IMR-90 (cell line): ENCODE measurements at regions of chr2 and their contacts with region 1.

Region 1: GRCh38 chr2:176317199-176317598 is 48.0 kb downstream of the MTX2 start:
- DNase-seq: no peak
- ATAC-seq: no peak
- H3K4me3 ChIP-seq: no peak overlapping the region
- H3K27ac ChIP-seq: no peak overlapping the region
- H3K4me1 ChIP-seq: no peaks in the 10 kb centered on the region
- H3K27me3 ChIP-seq: no peaks in the 10 kb centered on the region
- CTCF ChIP-seq: no peak
- POLR2A ChIP-seq: no peak
- RAD21 ChIP-seq: no peak

Region 2: DNA sequence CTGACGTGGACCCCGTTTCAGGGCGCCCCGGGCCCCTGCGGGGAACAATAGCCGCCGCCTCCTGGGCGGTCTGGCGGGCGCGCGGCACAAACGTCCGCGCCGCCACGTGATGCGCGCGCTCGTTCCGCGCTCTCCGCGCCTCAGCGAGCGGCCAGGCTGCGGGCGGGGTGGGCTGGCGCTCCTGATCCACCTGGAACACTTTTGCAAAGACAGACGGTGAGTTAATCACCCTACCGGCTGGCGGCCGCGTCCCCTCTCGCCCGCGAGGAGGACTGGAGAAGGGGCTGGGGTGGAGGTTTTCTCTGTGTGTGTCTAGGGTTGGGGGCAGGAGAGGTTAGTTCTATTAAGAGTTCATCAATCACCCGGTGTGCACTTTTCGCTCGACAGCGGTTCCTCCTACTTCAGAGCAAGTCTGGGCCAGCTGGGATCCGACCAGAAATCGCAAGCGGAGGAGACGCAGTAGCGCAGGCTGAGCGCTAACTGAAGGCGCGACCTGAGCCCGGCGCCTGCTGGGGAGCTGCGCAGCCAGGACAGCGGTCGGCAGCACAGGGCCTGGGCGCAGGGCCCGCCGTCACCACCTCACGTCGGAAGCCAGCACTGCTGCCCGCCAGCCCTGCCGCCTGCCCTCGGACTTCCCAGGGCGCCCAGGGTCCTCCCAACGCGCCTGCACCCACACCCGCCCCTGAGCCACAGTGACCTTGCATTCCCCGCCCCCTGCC is 139.0 kb before region 1 on chr2:
- CTCF ChIA-PET with region 1: no interaction called
- POLR2A ChIA-PET with region 1: no interaction called
- dilution Hi-C with region 1: no loop called
- in situ Hi-C with region 1: no loop called
- intact Hi-C with region 1: no loop called
- DNase-seq: no peak
- ATAC-seq: no peak
- H3K4me3 ChIP-seq: no peak overlapping the region
- H3K27ac ChIP-seq: no peak overlapping the region
- H3K4me1 ChIP-seq: no peaks in the 10 kb centered on the region
- H3K27me3 ChIP-seq: peaks cover 70% of the 10 kb centered on the region
- CTCF ChIP-seq: no peak
- POLR2A ChIP-seq: no peak
- RAD21 ChIP-seq: no peak

Region 3: DNA sequence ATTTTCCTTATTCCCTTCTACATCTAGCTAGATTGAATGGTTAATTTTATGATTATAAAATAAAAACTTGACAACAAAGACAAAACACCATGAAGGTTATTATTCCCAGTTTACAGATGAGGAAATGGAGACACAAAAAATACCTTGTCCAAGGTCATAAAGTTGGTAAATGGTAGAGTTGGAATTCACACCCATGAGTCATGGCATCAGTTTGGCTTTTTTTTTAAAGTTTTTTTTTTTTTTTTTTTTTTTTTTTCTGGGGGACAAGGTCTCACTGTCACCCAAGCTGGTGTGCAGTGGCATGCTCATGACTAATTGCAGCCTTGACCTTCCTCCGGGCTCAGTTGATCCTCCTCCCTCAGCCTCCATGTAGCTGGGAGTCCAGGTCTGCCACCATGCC is 22.0 kb after region 1 on chr2:
- CTCF ChIA-PET with region 1: no interaction called
- POLR2A ChIA-PET with region 1: no interaction called
- dilution Hi-C with region 1: no loop called
- in situ Hi-C with region 1: no loop called
- intact Hi-C with region 1: loop called (anchors 1 kb)
- DNase-seq: no peak
- ATAC-seq: no peak
- H3K4me3 ChIP-seq: no peak overlapping the region
- H3K27ac ChIP-seq: no peak overlapping the region
- H3K4me1 ChIP-seq: no peaks in the 10 kb centered on the region
- H3K27me3 ChIP-seq: no peaks in the 10 kb centered on the region
- CTCF ChIP-seq: no peak
- POLR2A ChIP-seq: no peak
- RAD21 ChIP-seq: no peak